HepG2 (cell line): ENCODE measurements at regions of chr12 and their contacts with region 1.

Region 1: GRCh38 chr12:22083167-22083566 is 37.1 kb downstream of the CMAS start:
- DNase-seq: peak; percentile 16
- ATAC-seq: no peak
- H3K4me3 ChIP-seq: no peak overlapping the region
- H3K27ac ChIP-seq: no peak overlapping the region
- H3K4me1 ChIP-seq: peaks cover 16% of the 10 kb centered on the region
- H3K27me3 ChIP-seq: no peaks in the 10 kb centered on the region
- CTCF ChIP-seq: peak; percentile 42
- EP300 ChIP-seq: no peak
- POLR2A ChIP-seq: no peak
- RAD21 ChIP-seq: no peak

Region 2: GRCh38 chr12:22459838-22460490 is 376.8 kb after region 1 on chr12:
- CTCF ChIA-PET with region 1: interaction called, 3 read pairs
- POLR2A ChIA-PET with region 1: no interaction called
- in situ Hi-C with region 1: loop called (anchors 5 kb)
- intact Hi-C with region 1: loop called (anchors 1 kb)
- DNase-seq: peak; percentile 43
- ATAC-seq: peak; percentile 54
- H3K4me3 ChIP-seq: no peak overlapping the region
- H3K27ac ChIP-seq: no peak overlapping the region
- H3K4me1 ChIP-seq: no peaks in the 10 kb centered on the region
- H3K27me3 ChIP-seq: no peaks in the 10 kb centered on the region
- CTCF ChIP-seq: peak; percentile 55
- EP300 ChIP-seq: no peak
- POLR2A ChIP-seq: no peak
- RAD21 ChIP-seq: no peak